HAP-1 (cell line): ENCODE measurements at regions of chr2 and their contacts with region 1.

Region 1: DNA sequence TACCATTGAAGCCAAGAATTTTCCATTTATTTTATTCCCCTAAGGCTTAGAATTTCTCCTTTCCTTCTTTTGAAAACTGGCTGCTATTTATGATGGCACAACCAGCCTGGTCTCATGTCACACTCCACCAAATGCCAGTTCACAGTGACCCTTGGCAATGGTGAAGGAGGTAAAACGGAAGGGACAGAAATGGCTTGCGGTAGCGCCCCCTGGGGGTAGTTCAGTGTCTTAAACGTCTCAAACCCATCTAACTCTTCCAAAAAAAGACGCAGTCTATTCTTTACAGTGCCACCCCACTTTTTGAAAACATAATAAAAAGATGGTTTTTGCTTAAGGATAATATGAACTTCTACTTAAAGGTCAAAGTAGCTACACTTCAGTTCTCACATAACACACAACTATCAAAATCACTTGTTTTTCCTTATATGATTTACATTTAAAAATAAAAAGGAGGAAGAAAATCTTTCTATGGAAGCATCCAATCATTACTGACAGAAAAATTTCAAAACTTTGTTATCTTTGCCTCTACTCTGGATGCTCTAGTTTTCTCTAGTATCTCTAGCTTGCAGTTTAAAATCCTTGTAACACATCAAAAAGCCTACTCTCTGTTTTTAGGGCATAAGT is 28.0 kb downstream of the PNO1 start:
- DNase-seq: peak; percentile 65 to 83
- H3K4me3 ChIP-seq: no peak overlapping the region
- H3K4me1 ChIP-seq: no peaks in the 10 kb centered on the region
- H3K27me3 ChIP-seq: no peaks in the 10 kb centered on the region

Region 2: DNA sequence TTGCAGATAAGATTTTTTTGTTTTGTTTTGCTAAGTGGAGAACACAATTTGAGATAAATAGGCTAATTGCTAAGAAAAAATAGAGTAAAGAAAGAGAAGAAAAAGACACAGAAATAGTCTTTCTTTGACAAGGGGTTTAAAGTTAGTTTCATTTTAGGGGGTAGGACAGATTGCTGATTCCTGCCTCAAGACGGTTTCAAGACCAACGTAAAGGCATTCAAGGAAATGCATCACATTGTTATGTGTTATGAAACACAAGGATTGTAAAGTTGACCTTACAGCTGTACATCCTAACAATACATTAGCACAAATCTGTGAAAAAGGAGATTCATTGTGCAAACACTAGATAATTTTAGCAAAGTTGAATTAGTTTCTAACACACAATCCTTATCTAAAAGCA is 811.2 kb before region 1 on chr2:
- in situ Hi-C with region 1: no loop called
- DNase-seq: peak in 1 of 2 experiments; percentile 10
- H3K4me3 ChIP-seq: no peak overlapping the region
- H3K4me1 ChIP-seq: peaks cover 12% of the 10 kb centered on the region
- H3K27me3 ChIP-seq: 0 out of 2 replicates have a peak, but pooled peaks cover 2% of the 10 kb centered on the region

Region 3: DNA sequence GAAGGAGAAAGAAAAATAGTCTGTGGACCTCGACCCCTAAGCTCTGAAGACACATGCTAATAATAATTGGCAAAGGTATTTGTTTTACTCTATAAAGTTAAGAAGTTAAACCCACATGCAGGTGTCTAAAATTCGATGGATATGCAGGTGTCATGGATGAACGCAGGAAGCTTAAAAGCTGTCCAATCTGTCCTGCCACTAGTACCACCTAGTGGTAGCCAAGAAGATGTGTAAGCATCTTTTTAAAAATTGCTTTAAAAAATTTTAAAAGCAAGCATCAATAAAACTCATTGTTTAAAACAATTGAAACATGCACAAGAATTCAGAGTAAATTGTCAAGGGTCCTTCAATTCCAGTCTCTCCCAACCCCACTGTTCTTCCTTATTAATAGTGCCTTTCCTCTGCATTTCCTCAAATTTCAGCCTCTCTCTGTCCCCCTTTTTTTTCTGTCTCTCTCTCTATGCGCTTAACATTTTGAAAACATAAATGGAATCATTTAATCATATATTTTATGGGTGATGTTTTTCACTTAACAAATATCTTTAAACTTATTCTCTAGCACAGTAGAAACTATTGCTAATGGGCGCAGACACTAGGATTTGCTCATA is 97.3 kb after region 1 on chr2:
- in situ Hi-C with region 1: loop called (anchors 25 kb)
- DNase-seq: peak; percentile 28 to 53
- H3K4me3 ChIP-seq: no peak overlapping the region
- H3K4me1 ChIP-seq: no peaks in the 10 kb centered on the region; the same call in 1 of the 2 replicates
- H3K27me3 ChIP-seq: peaks cover 3% of the 10 kb centered on the region